PC-9 (cell line): ENCODE measurements at regions of chr3 and their contacts with region 1.

Region 1: GRCh38 chr3:189324538-189325138 is 152.9 kb downstream of the TPRG1 start:
- DNase-seq: peak; percentile 92 to 100
- H3K4me3 ChIP-seq: no peak overlapping the region
- H3K27ac ChIP-seq: peak overlapping the region; percentile 89
- H3K4me1 ChIP-seq: peaks cover 40% of the 10 kb centered on the region
- H3K27me3 ChIP-seq: no peaks in the 10 kb centered on the region
- CTCF ChIP-seq: no peak

Region 2: DNA sequence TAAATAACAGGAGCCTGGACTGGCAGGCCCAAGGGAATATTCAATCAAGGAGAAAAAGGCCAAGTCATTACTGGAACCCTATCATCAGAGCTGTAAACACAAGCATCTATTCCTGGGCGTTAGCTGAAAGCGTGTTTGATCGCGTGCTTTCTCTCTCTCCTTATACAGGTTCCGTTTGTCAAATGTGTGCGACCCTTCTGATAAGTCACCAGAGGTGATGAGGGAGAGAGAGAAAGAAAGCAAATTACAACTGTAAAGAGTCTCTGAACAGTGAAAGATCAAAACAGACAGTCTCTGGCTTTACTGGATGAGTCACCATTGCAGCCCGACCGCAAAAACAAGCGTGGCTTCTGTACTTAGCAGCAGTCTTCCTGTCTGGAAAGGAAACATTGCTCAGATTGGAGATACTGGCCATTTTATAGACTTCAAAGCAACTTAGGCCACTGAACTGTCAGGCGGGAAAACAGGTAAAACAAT is 192.4 kb before region 1 on chr3:
- CTCF ChIA-PET with region 1: no interaction called
- POLR2A ChIA-PET with region 1: no interaction called
- intact Hi-C with region 1: no loop called
- DNase-seq: peak; percentile 69 to 78
- H3K4me3 ChIP-seq: no peak overlapping the region
- H3K27ac ChIP-seq: 0 out of 2 replicates have a peak overlapping the region, but pooled peaks have one; percentile 2
- H3K4me1 ChIP-seq: peaks cover 14% of the 10 kb centered on the region
- H3K27me3 ChIP-seq: no peaks in the 10 kb centered on the region
- CTCF ChIP-seq: no peak

Region 3: GRCh38 chr3:189270248-189270832 is 54.3 kb before region 1 on chr3:
- CTCF ChIA-PET with region 1: interaction called, 19 read pairs
- POLR2A ChIA-PET with region 1: interaction called, 9 read pairs
- intact Hi-C with region 1: loop called (anchors 1 kb)
- DNase-seq: peak; percentile 83 to 86
- H3K4me3 ChIP-seq: no peak overlapping the region
- H3K27ac ChIP-seq: no peak overlapping the region
- H3K4me1 ChIP-seq: no peaks in the 10 kb centered on the region
- H3K27me3 ChIP-seq: no peaks in the 10 kb centered on the region
- CTCF ChIP-seq: peak; percentile 78

Region 4: DNA sequence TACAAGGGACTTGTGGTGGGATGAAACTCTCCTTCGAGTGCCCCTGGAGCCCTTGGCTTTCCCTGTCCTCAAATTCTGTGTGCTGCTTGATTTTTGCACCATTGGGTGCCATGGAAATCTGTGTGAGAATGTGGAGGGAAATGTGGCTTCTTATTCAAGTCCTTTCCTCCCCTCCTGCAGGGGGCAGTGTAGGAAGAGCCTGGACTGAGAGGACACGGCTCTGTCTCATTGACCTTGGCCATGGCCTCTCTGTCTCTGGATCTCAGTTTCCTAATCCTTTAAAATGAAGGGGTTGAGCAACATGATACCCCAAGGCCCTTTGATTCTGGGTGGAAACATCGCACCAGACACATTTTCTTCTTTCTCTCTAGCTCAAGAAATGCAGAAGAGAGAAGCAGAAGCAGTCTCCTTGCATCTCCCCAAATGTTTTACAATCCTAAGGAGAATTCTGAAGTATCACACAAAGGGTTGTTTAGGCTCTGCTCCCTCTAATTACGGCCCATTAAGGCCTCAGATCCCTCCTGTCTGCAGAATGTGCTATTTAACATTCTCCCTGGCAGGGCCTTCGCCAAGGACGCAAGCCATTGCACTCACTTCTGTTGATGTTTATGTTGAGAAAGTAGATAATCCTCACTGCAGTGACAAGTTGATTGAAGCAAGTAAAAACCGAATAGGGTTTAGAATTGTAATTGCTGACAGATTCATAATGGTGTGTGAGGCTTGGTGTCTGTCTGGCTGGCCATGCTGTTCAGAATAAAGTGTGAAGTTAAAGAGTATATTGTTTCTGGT is 16.2 kb after region 1 on chr3:
- CTCF ChIA-PET with region 1: no interaction called
- POLR2A ChIA-PET with region 1: interaction called, 15 read pairs
- intact Hi-C with region 1: no loop called
- DNase-seq: peak in 1 of 2 experiments; percentile 29
- H3K4me3 ChIP-seq: no peak overlapping the region
- H3K27ac ChIP-seq: no peak overlapping the region
- H3K4me1 ChIP-seq: peaks cover 17% of the 10 kb centered on the region
- H3K27me3 ChIP-seq: no peaks in the 10 kb centered on the region
- CTCF ChIP-seq: no peak; the same call in 1 of the 2 replicates

Region 5: DNA sequence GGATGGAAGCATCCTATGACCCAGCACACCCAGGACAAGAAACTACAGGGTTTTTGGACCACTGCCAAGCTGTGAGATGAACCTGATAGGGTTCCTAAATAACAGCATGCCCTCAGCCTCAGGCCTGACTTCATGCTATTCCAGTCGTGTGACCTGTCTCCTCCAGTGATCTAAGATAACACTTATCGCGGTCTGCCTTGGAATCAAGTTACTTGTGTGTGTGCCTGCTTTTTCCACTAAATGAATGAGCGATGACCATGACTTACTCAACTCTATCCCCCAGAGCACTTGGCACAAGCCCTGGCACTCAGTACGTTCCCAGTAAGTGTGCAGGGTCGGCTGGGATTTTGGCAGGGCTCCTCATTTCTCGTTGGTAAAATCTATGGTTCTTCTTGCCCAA is 133.9 kb after region 1 on chr3:
- CTCF ChIA-PET with region 1: no interaction called
- POLR2A ChIA-PET with region 1: no interaction called
- intact Hi-C with region 1: loop called (anchors 1 kb)
- DNase-seq: peak; percentile 84 to 86
- H3K4me3 ChIP-seq: no peak overlapping the region
- H3K27ac ChIP-seq: no peak overlapping the region
- H3K4me1 ChIP-seq: peaks cover 11% of the 10 kb centered on the region
- H3K27me3 ChIP-seq: no peaks in the 10 kb centered on the region
- CTCF ChIP-seq: no peak

Region 6: DNA sequence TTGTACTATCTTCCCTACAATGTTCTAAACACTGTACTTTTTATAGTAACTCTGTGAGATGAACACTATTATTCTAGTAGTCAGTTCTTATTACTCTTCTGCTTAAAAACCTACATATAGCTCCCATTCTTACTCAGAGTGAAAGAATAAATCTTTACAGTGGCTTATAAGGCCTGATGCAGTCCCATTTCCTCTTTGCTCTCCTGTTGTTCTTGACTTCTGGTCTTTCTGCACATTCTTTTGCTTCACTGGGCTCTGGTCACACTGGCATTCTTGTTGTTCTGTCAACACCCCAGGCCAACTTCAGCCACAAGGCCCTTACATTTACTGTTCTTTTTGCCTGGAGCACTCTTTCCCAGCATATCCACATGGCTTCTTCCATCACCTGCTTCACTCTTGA is 248.4 kb after region 1 on chr3:
- CTCF ChIA-PET with region 1: no interaction called
- POLR2A ChIA-PET with region 1: no interaction called
- intact Hi-C with region 1: loop called (anchors 1 kb)
- DNase-seq: peak; percentile 26 to 39
- H3K4me3 ChIP-seq: no peak overlapping the region
- H3K27ac ChIP-seq: peak overlapping the region; percentile 91
- H3K4me1 ChIP-seq: peaks cover 30% of the 10 kb centered on the region
- H3K27me3 ChIP-seq: no peaks in the 10 kb centered on the region
- CTCF ChIP-seq: no peak

Region 7: GRCh38 chr3:189947948-189948723 is 623.5 kb after region 1 on chr3:
- CTCF ChIA-PET with region 1: interaction called, 5 read pairs
- POLR2A ChIA-PET with region 1: no interaction called
- intact Hi-C with region 1: loop called (anchors 1 kb)
- DNase-seq: peak; percentile 40 to 56
- H3K4me3 ChIP-seq: no peak overlapping the region
- H3K27ac ChIP-seq: peak overlapping the region; percentile 39
- H3K4me1 ChIP-seq: peaks cover 42% of the 10 kb centered on the region
- H3K27me3 ChIP-seq: no peaks in the 10 kb centered on the region
- CTCF ChIP-seq: peak; percentile 94